ENCODE measurements at regions of chr14 and their contacts with region 1.

Region 1: GRCh38 chr14:67187210-67187609 is 2.0 kb upstream of the GARIN2 start:
- DNase-seq: no peak
- H3K4me3 Mint-ChIP-seq: no peak overlapping the region
- H3K27ac Mint-ChIP-seq: no peak overlapping the region
- H3K4me1 Mint-ChIP-seq: peaks cover 25% of the 10 kb centered on the region
- H3K27me3 Mint-ChIP-seq: no peaks in the 10 kb centered on the region

Region 2: GRCh38 chr14:67240978-67241414 is 53.8 kb after region 1 on chr14:
- intact Hi-C with region 1: loop called (anchors 1 kb)
- DNase-seq: peak; percentile 92
- H3K4me3 Mint-ChIP-seq: peak overlapping the region; percentile 87
- H3K27ac Mint-ChIP-seq: peak overlapping the region; percentile 80
- H3K4me1 Mint-ChIP-seq: peaks cover 18% of the 10 kb centered on the region
- H3K27me3 Mint-ChIP-seq: peaks cover 20% of the 10 kb centered on the region

Region 3: GRCh38 chr14:67331368-67332125 is 144.3 kb after region 1 on chr14:
- intact Hi-C with region 1: no loop called
- DNase-seq: no peak
- H3K4me3 Mint-ChIP-seq: no peak overlapping the region
- H3K27ac Mint-ChIP-seq: no peak overlapping the region
- H3K4me1 Mint-ChIP-seq: no peaks in the 10 kb centered on the region
- H3K27me3 Mint-ChIP-seq: no peaks in the 10 kb centered on the region